ENCODE measurements at regions of chr10 and their contacts with region 1.

Region 1: DNA sequence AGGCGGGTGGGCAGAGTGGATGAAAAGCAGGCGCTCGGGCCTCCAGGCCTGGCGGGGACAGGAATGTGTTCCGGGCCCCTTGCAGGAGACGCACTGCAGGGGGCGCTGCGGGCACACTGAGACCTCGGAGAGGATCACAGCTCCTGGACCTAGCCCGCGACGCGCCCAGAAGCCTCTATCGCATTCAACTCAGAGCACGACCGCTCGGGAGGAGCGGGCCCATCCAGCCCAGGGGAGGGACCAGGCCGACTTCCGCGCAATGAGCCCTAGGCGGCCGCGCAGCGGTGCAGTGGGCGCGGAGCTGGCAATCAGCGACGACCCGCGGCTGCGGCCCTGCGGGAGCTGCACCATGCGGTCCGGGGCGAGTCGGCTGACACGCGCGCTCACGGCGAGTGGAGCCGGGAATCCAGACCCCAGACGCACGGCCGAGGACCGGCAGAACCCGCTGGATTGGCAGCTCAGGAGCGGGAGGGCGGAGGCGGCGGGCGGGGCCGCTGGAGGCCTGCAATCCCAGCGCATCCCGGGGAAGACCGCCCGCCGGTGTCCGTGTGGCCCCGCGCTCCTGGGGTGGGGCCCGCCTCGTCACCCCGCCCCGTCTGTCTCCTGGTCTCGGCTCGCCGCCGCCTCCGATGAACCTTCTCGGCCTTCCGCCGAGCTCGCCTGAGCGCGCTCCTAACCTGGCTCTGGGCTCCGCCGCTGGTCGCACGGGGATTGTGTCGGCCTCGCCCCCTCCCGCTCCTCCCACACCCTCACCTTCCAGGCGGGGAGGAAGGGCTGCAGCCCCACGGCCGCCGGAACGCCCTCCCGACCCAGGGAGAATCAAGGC is 33.5 kb upstream of the GRID1 start:
- DNase-seq: peak; percentile 94

Region 2: GRCh38 chr10:86521678-86522509 is 121.8 kb after region 1 on chr10 and contains the start of gene WAPL:
- CTCF ChIA-PET with region 1: no interaction called
- POLR2A ChIA-PET with region 1: interaction called, 11 read pairs
- DNase-seq: peak; percentile 96

Region 3: DNA sequence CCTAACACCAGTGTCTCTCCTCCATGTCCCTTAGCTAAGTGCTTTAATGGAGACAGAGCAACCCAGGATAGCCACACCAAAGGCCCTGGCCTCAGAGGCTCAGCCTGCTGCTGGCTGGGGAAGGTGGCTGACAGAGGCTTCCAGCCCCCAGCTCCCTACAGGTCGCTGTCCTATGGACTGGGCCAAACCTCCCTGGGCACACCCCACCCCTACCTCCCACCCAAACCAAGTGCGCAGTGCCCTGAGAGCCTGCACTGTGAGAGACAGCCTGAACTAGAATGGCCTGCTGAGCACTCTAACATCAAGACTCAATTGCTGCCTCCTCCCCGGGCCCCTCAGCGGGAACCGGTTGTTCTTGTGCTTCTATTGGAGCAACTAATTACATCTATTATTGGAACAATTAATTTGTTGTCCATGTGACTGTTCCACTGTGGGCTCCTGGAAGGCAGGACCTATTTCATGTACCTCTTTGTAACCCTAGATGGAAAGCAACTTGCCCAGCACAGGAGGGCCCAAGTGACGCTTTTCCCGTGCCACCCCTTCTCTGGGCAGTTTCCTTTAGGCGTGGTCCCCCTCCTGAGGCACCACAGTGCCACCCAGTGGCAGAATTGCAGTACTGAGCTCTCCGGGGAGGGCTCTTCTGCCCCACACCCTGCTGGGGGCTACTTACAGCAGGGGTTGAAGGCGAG is 185.1 kb after region 1 on chr10:
- CTCF ChIA-PET with region 1: interaction called, 13 read pairs
- POLR2A ChIA-PET with region 1: interaction called, 5 read pairs
- DNase-seq: peak; percentile 83